ENCODE measurements at regions of chr4 and their contacts with region 1.

Region 1: DNA sequence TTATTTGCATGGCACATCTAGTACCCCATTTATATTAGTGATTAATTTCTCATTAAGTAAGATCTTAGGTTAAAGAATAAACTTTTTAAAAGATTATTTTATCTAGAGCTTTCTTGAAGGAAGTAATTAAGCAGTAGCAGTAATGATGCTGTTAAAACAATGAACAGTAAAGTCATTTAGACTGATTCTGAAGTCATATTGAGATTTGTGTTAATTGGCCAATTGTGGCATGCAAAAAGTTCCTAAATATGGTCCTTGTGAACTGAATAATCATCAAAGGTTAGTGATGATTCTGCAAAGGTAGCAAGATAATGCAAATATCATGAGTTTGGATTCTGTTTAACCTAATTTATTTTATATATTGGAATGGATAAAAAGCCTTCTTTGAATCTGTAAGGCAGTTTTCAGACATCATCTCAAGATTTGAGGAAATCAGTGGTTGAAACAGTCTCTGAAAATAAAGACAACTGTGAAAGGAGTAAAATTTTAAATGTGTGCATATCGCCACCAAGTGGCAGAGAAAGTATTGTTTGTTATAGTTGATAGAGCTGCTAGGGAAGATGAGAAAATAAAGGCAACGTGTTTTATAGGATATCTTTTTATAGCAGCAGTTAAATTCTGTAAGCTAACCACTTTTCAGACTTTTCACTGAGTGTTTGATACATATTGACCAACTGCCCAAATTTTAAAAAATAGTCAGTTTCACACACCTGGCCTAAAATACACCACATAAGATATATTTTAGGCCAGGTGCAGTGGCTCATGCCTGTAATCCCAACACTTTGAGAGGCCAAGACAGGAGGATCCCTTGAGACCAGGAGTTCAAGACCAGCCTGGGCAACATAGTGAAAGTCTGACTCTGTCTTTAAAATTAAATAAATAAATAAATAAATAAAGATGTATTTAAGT is 79.6 kb downstream of the CCKAR start:
- H3K4me3 Mint-ChIP-seq: no peak overlapping the region
- H3K27ac Mint-ChIP-seq: no peak overlapping the region
- H3K4me1 Mint-ChIP-seq: peaks cover 11% of the 10 kb centered on the region
- H3K27me3 Mint-ChIP-seq: no peaks in the 10 kb centered on the region

Region 2: DNA sequence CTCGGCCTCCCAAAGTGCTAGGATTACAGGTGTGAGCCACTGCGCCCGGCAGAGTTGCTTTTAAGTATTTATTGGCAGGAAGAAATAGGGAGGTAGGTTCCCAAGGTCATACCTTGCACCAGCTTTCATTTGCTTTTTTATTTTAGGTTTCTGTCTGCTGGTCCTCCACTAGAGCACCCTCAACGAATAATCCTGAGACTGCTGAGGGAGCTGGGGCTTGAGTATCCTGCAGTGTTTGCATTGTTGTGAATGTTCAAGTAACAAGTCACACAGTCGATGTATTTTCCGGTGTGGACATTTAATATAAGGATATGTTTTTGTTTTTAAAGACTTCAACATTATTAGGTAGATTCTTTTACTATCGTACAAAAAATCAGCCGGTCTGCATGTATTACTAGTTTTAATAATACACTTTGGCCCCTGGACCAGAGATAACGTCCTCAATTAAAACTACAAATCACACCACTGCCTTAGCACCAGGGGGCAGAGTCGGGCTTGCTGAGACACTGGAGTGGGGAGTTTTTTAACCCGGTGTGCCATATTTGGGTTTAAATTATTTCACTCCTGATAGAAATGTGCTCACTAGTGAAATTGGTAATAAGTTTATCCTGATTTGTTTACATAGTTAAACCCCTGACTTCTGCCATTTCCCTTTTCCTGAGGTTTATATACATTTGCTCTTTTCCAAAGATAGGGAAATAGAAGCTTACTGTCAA is 485.0 kb before region 1 on chr4:
- intact Hi-C with region 1: loop called (anchors 5 kb)
- H3K4me3 Mint-ChIP-seq: no peak overlapping the region
- H3K27ac Mint-ChIP-seq: no peak overlapping the region
- H3K4me1 Mint-ChIP-seq: peaks cover 24% of the 10 kb centered on the region
- H3K27me3 Mint-ChIP-seq: no peaks in the 10 kb centered on the region

Region 3: GRCh38 chr4:26330186-26330787 is 80.4 kb before region 1 on chr4:
- intact Hi-C with region 1: loop called (anchors 1 kb)
- H3K4me3 Mint-ChIP-seq: peak overlapping the region; percentile 23
- H3K27ac Mint-ChIP-seq: peak overlapping the region; percentile 55
- H3K4me1 Mint-ChIP-seq: peaks cover 76% of the 10 kb centered on the region
- H3K27me3 Mint-ChIP-seq: no peaks in the 10 kb centered on the region

Region 4: DNA sequence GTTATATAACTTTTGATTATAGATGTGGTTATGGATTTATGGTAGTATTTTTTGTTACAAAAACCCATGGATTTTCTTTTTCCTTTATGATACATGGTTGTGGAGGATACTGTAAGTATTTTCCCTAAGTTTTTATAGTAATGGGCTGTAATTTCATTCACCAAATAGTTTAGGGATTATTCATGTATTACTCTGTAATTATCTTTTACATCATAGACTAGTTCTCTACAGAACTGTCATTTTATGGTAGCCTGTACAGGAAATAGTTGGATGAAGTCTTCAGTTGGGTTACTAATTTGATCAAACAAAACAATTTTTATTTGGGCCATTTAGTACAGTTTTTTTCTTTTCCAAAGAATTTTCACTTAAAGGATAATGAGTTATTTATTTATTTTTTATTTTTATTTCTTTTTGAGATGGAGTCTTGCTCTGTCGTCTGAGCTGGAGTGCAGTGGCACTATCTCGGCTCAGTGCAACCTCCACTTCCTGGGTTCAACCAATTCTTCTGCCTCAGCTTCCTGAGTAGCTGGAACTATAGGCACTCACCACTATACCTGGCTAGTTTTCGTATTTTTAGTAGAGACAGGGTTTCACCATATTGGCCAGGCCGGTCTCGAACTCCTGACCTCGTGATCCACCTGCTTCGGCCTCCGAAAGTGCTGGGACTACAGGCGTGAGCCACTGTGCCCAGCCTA is 47.7 kb before region 1 on chr4:
- intact Hi-C with region 1: loop called (anchors 10 kb)
- H3K4me3 Mint-ChIP-seq: no peak overlapping the region
- H3K27ac Mint-ChIP-seq: no peak overlapping the region
- H3K4me1 Mint-ChIP-seq: peaks cover 13% of the 10 kb centered on the region
- H3K27me3 Mint-ChIP-seq: no peaks in the 10 kb centered on the region

Region 5: GRCh38 chr4:26648260-26648659 is 237.6 kb after region 1 on chr4:
- intact Hi-C with region 1: no loop called
- H3K4me3 Mint-ChIP-seq: no peak overlapping the region
- H3K27ac Mint-ChIP-seq: no peak overlapping the region
- H3K4me1 Mint-ChIP-seq: no peaks in the 10 kb centered on the region
- H3K27me3 Mint-ChIP-seq: no peaks in the 10 kb centered on the region